Spleen (tissue), 13 donors: ENCODE measurements at regions of chrX and their contacts with region 1.

Region 1: DNA sequence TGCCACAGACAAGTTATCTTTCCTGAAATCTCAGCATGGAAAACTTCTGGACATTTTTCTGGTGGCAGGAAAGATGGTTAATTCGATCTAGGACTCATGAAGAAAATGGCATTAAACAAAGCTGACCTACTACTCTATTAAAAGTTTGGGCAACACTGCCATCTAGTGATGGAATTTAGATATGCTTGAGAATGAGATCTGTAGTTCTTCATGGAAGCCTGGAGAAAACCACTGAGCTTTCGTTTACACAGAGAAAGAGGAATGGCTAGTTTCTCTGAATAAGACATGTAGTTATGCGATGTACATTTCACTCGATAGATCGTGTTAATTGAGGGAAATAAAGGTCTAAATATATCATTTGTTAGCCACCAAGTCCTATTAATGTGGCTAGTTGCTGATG is 51.7 kb upstream of the CHRDL1 start:
- DNase-seq: no peak
- H3K4me3 ChIP-seq: no peak overlapping the region
- H3K27ac ChIP-seq: no peak overlapping the region
- H3K4me1 ChIP-seq: no peaks in the 10 kb centered on the region
- H3K27me3 ChIP-seq: peaks cover 0 to 21% (median 0%) of the 10 kb centered on the region in 7 donors
- CTCF ChIP-seq: peak in 10 of 11 experiments; percentile 28 to 71 (median 58)
- POLR2A ChIP-seq: no peak

Region 2: DNA sequence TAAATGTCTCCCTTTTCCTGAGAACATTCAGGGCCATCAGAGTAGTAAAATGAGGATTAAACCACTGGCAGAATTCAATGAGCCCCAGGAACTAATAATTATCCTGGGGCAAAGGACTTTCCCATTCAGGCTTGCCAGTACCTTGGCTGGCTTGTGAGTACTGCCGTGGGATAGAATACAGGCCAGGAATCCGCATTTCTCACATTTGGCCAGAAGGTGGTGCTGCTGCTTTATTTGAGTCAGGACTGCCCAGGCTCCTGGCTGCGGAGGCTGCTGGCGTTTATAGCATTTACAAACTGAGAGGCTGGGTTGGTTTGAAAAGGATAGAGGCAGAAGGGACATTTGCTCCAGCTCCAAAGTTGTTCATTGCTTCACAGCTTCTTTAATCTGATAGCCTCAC is 397.3 kb before region 1 on chrX:
- intact Hi-C with region 1: loop called (anchors 2 kb)
- DNase-seq: no peak
- H3K4me3 ChIP-seq: no peak overlapping the region
- H3K27ac ChIP-seq: no peak overlapping the region
- H3K4me1 ChIP-seq: no peaks in the 10 kb centered on the region
- H3K27me3 ChIP-seq: peaks cover 0 to 47% (median 0%) of the 10 kb centered on the region in 7 donors
- CTCF ChIP-seq: peak in 9 of 11 experiments; percentile 47 to 74 (median 67)
- POLR2A ChIP-seq: no peak

Region 3: GRCh38 chrX:110964786-110965185 is 117.5 kb after region 1 on chrX:
- intact Hi-C with region 1: no loop called
- DNase-seq: no peak
- H3K4me3 ChIP-seq: no peak overlapping the region
- H3K27ac ChIP-seq: no peak overlapping the region
- H3K4me1 ChIP-seq: no peaks in the 10 kb centered on the region
- H3K27me3 ChIP-seq: peaks cover 0 to 4% (median 0%) of the 10 kb centered on the region in 7 donors
- CTCF ChIP-seq: no peak
- POLR2A ChIP-seq: no peak